Activated CD4-positive, alpha-beta T cell treated with anti-CD3 and anti-CD28 coated beads, Interleukin-2, amount 10 ng/mL, durations not matched to agents 24 days and 14 days (primary cell): ENCODE measurements at regions of chr10 and their contacts with region 1.

Region 1: DNA sequence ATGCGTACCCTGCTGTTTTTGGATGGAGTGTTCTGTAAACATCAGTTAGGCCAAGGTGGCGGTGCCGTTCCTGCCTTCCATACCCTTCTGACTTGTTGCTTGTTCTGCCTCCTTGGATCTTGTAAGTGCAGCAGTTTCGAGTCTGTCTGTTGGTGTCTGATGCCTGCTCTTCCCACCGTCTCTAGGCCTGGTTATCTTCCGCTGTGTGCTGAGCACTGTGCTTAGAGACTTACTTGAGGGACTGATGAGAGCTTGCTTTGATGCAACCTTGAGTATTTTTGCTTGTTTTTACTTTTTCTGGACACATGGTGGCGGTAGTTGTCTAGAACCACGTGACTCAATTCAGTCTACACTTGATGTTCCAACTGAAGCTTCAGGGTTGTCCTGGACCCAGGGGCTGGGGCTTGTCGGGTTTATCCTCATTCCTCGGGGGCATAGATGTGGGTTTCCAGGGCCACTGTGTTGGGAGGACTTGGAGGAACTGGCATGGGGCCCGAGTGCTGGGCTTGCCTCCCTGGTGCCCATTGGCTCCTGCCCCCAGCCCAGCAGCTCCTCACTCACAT is 14.4 kb upstream of the SPRN start:
- DNase-seq: peak; percentile 76
- H3K4me3 Mint-ChIP-seq: no peak overlapping the region
- H3K27ac Mint-ChIP-seq: no peak overlapping the region
- H3K4me1 Mint-ChIP-seq: peaks cover 14% of the 10 kb centered on the region
- H3K27me3 Mint-ChIP-seq: peaks cover 9% of the 10 kb centered on the region

Region 2: GRCh38 chr10:133489816-133490588 is 51.2 kb after region 1 on chr10:
- intact Hi-C with region 1: loop called (anchors 10 kb)
- DNase-seq: no peak
- H3K4me3 Mint-ChIP-seq: no peak overlapping the region
- H3K27ac Mint-ChIP-seq: peak overlapping the region; percentile 48
- H3K4me1 Mint-ChIP-seq: peaks cover 7% of the 10 kb centered on the region
- H3K27me3 Mint-ChIP-seq: peaks cover 2% of the 10 kb centered on the region